ENCODE measurements at regions of chr15 and their contacts with region 1.

Region 1: DNA sequence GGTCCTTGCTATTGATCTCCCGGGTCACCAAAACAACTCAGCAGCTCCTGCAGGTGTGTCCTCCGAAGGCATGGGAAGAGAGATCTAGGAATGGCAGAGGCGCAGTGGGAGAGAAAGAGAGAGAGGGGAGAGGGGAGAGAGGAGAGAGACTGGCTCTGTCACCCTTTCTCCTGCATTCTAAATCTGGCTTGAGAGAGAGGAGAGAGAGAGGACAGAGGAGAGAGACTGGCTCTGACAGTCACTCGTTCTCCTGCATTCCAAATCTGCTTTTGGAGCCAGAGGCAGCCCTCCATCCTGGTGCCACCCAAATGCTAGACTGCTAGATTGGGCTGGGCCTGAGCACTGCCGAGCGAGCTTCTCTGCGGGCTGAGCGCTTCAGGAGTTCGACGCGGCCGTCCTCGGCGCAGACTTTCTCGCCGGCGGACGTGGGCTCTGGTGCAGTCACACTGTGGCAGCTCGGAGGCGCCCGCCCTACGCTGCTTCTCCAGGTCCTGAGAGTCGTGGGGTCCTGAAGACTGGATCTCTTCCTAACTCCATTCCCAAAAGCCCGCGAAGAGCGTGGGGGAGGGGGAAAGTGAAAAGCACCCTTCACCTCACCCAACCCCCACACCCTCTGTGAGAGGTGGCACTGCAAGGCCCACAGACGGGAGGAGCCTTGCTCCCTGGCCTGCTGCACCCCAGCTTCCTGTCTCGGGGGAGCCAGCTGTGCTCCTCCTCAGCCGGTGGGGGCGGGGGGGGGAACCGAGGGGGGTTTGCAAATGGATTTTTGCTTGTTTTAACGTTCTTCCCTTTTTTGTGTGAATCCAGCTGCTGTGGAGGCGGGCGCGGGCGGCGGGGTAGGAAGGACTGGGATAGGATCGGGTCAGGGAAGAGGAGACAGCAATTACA is 222.3 kb downstream of the MEIS2 start:
- DNase-seq: peak in 2 of 10 donors; percentile 55 to 58

Region 2: DNA sequence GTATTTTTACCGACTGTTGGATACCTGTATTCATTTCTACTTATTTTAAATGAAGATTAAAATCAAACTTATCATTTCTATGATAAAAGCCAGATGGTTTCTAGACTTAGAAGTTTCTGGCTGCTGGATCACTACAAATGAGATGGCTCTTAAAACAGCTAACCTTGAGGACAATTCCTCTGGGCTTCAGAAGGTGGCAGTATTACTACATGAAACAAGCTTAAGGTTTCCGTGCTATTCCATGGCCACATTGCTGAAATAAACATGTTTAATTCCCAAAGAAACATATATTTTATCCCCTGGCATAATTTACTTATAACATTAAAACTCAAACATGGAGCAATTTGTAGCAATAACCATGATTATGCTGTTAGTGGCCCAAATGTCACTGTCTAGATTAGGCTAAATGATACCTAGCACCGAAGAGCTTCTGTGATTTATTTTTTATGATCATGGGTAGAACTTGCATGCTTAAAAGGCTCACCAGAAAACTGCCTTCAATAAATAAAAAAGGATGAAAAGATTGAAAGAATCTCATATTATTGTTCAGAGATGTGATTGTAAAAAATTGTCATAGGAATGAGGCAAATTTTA is 1588.9 kb before region 1 on chr15:
- intact Hi-C with region 1: loop called (anchors 5 kb)
- DNase-seq: no peak

Region 3: GRCh38 chr15:36818260-36818659 is 59.8 kb before region 1 on chr15:
- intact Hi-C with region 1: no loop called
- DNase-seq: peak in 2 of 10 donors; percentile 52 to 68